ENCODE measurements at regions of chr13 and their contacts with region 1.

Region 1: DNA sequence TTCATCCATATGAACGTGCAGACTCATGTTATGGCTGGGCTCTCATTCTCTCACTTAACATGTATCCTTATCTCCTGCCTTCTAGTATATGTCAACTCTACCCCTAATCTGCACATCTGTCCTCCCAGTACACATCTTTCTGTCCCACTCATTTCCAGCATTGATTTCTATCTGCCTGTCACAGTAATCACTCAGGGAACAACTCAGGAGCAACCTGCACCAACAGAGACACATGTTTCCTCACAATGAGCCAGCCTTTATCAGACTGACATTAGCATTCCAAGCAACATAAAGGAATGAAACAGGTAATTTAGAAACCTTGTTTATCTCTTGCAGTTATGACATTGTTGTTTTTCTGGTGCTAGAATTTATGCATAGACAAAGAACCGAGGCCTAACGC is 17.6 kb upstream of the SLC7A1 start:
- DNase-seq: no peak
- H3K4me3 ChIP-seq: no peak overlapping the region
- H3K27ac ChIP-seq: no peak overlapping the region
- H3K4me1 ChIP-seq: no peaks in the 10 kb centered on the region
- H3K27me3 ChIP-seq: peaks cover 6% of the 10 kb centered on the region
- CTCF ChIP-seq: no peak

Region 2: GRCh38 chr13:29529754-29530153 is 83.3 kb before region 1 on chr13:
- CTCF ChIA-PET with region 1: no interaction called
- dilution Hi-C with region 1: loop called (anchors 5 kb)
- in situ Hi-C with region 1: no loop called
- intact Hi-C with region 1: no loop called
- DNase-seq: no peak
- H3K4me3 ChIP-seq: no peak overlapping the region
- H3K27ac ChIP-seq: no peak overlapping the region
- H3K4me1 ChIP-seq: no peaks in the 10 kb centered on the region
- H3K27me3 ChIP-seq: no peaks in the 10 kb centered on the region
- CTCF ChIP-seq: no peak

Region 3: DNA sequence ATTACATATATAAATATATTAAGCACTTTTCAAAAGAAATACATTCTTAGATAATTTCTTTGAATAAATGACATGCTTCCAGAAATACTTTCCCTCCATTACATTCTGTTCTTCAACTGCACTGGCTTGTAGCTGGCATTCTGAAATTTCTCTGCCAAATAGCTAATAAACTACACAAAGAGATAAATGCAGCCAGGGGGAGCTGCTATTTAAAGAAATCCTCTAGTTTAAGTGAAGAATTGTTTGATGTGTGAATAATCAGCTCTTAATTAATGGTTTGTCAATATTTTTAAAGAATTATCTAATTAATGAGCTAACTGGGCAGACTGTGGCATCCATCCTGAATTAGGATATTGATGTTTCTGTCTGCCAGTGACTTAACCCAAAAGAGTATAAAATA is 48.3 kb before region 1 on chr13:
- CTCF ChIA-PET with region 1: no interaction called
- dilution Hi-C with region 1: loop called (anchors 5 kb)
- in situ Hi-C with region 1: no loop called
- intact Hi-C with region 1: no loop called
- DNase-seq: no peak
- H3K4me3 ChIP-seq: no peak overlapping the region
- H3K27ac ChIP-seq: no peak overlapping the region
- H3K4me1 ChIP-seq: peaks cover 33% of the 10 kb centered on the region
- H3K27me3 ChIP-seq: no peaks in the 10 kb centered on the region
- CTCF ChIP-seq: no peak

Region 4: GRCh38 chr13:29958476-29958875 is 345.4 kb after region 1 on chr13:
- CTCF ChIA-PET with region 1: no interaction called
- dilution Hi-C with region 1: no loop called
- in situ Hi-C with region 1: no loop called
- intact Hi-C with region 1: no loop called
- DNase-seq: no peak
- H3K4me3 ChIP-seq: no peak overlapping the region
- H3K27ac ChIP-seq: no peak overlapping the region
- H3K4me1 ChIP-seq: no peaks in the 10 kb centered on the region
- H3K27me3 ChIP-seq: peaks cover 7% of the 10 kb centered on the region
- CTCF ChIP-seq: no peak